Activated CD4-positive, alpha-beta T cell treated with anti-CD3 and anti-CD28 coated beads for 36 hours (primary cell): ENCODE measurements at regions of chr2 and their contacts with region 1.

Region 1: DNA sequence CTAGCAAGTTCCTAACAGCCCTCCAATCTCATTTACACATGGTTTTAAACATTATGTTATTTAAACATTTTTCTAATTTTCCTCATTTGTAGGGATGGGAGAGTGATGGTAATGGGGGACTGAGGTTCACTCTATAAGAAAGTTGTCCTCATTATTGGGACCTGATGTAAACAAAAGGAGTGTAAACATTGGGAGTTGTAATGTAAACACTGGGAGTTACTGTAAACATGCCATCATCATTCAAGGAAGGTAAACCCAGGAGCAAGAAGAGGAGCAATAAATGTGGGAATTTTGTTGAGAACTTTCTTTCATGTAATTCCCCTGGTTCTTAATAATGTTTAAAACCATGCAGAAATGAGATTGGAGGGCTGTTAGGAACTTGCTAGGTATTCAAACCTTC is 17.8 kb downstream of the RFTN2 start:
- DNase-seq: no peak
- ATAC-seq: no peak
- H3K4me3 Mint-ChIP-seq: no peak overlapping the region
- H3K27ac Mint-ChIP-seq: no peak overlapping the region
- H3K4me1 Mint-ChIP-seq: no peaks in the 10 kb centered on the region
- H3K27me3 Mint-ChIP-seq: no peaks in the 10 kb centered on the region

Region 2: DNA sequence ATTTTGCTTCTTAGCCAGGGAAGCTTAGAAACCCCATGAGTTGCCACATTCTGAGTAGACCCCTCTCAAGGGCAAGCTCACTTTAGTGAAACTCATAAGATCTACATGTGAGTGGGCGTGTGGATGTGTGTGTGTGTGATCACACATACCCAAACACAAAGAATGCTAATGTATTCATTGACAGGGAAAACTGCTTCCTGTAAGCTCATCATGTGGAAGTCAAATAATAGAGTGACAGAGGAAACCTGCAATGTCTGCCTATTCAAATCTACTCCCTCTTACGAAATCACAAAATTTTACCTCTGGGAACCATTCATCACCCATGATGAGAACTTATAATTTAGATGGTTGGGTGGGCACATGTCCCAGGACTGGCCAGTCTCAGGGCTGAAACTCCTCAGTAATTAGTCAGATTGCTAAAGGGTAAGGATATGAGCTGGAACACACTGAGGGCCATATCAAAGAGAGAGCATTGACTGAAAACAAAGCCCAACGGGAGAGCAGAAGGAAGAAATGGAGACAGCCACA is 1112.6 kb before region 1 on chr2:
- CTCF ChIA-PET with region 1: no interaction called
- POLR2A ChIA-PET with region 1: no interaction called
- intact Hi-C with region 1: loop called in 1 of 2 experiments (anchors 10 kb)
- DNase-seq: no peak
- ATAC-seq: no peak
- H3K4me3 Mint-ChIP-seq: no peak overlapping the region
- H3K27ac Mint-ChIP-seq: no peak overlapping the region
- H3K4me1 Mint-ChIP-seq: no peaks in the 10 kb centered on the region
- H3K27me3 Mint-ChIP-seq: peaks cover 7% of the 10 kb centered on the region